ENCODE measurements at regions of chr16 and their contacts with region 1.

Region 1: DNA sequence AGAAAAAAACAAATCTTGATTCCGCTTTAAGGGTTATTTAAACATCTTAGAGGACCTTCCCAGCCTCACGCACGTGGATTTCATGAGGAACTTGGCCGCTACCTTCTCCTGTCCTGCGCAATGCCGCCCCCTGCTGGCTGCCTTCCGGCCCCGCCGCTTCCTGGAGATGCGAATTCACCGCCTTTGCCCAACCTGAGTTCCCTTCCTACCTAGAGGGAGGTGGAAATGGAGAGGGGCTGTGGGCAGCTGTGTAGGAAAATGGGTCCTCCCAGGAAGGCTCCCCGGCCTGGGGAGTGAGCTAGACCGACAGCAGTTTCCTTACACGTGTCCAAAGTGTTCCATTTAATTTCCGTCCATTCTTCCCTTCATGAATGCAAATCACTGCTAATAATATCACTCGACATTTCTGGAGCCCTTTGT is 1.0 kb upstream of the ABCC12 start:
- DNase-seq: peak; percentile 91
- H3K4me3 Mint-ChIP-seq: no peak overlapping the region
- H3K27ac Mint-ChIP-seq: no peak overlapping the region
- H3K4me1 Mint-ChIP-seq: peaks cover 26% of the 10 kb centered on the region
- H3K27me3 Mint-ChIP-seq: peaks cover 26% of the 10 kb centered on the region

Region 2: GRCh38 chr16:47018223-47018891 is 1138.4 kb before region 1 on chr16:
- CTCF ChIA-PET with region 1: no interaction called
- intact Hi-C with region 1: loop called (anchors 5 kb)
- DNase-seq: peak; percentile 73
- H3K4me3 Mint-ChIP-seq: no peak overlapping the region
- H3K27ac Mint-ChIP-seq: no peak overlapping the region
- H3K4me1 Mint-ChIP-seq: peaks cover 24% of the 10 kb centered on the region
- H3K27me3 Mint-ChIP-seq: no peaks in the 10 kb centered on the region

Region 3: GRCh38 chr16:47110939-47111338 is 1045.9 kb before region 1 on chr16:
- CTCF ChIA-PET with region 1: no interaction called
- intact Hi-C with region 1: loop called (anchors 1 kb)
- DNase-seq: no peak
- H3K4me3 Mint-ChIP-seq: no peak overlapping the region
- H3K27ac Mint-ChIP-seq: no peak overlapping the region
- H3K4me1 Mint-ChIP-seq: peaks cover 19% of the 10 kb centered on the region
- H3K27me3 Mint-ChIP-seq: no peaks in the 10 kb centered on the region

Region 4: DNA sequence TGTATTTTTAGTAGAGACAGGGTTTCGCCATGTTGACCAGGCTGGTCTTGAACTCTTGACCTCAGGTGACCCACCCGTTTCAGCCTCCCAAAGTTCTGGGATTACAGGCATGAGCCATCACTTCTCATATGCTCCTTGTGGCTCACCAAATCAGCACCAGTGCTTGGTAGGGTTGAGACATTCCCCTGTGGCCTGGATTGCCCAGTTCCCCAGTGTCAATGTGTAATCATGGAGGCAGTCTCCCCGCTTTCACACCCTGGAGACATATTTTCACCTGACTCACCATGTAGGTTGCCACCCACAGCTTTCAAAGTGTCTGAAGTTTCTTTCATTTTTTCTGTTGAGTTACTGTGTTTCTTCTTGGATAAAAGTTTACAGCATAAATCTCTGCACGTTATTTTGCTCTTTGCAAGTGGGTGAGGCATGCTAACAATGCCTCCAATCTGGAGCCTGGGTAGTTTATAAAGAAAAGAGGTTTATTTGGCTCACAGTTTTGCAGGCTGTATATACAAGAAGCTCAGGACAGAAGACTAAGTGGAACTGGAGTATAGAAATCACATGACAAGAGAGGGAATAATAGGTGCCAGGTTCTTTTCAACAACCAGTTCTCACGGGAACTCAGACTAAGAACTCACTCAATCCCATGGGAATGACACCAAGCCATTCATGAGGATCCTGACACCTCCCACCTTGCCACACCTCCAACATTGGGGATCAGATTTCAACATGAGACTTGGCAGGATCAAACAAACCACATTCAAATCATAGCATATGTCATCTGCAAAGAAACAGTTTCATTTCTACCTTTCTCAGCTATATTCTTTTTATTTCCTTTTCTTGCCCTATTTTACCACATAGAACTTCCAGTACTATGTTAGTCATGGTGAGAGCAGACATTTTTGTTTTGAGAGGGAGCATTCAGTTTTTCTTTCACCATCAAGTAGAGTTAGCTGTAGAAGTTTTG is 582.4 kb before region 1 on chr16:
- CTCF ChIA-PET with region 1: no interaction called
- intact Hi-C with region 1: loop called (anchors 1 kb)
- DNase-seq: peak; percentile 70
- H3K4me3 Mint-ChIP-seq: no peak overlapping the region
- H3K27ac Mint-ChIP-seq: peak overlapping the region; percentile 86
- H3K4me1 Mint-ChIP-seq: peaks cover 56% of the 10 kb centered on the region
- H3K27me3 Mint-ChIP-seq: no peaks in the 10 kb centered on the region

Region 5: DNA sequence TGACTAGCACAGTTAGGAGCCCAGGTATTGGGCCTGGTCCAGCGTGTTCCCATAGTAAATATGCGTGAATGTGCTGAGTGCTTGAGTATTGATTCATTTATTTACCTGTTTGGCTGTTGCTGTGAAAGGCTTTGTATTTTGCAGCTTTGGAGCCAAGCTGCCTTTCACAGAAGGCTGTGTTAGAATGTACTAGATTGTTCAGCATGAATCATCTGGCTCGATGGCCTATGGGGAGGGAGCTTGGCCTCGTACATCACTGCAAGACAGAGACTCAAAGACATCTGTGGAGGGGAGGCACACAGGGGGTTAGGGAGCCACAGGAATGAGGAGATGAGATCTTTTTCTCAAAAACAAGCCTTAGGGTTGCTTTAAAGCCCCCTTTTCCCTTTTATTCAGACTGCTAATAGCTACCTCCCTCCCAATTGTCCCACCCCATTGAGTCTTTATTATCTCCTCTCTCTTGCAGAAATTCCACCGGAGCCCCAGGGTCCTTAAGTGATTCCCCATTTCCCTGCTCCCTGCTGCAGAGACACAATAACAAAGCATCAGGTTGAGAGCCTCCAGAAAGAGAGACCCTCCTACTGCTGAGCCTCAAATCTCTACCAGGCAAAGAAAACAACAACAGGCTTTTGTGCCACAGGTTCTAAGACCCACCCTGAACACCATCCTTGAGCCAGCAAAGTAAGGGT is 308.2 kb before region 1 on chr16:
- CTCF ChIA-PET with region 1: no interaction called
- intact Hi-C with region 1: no loop called
- DNase-seq: no peak
- H3K4me3 Mint-ChIP-seq: no peak overlapping the region
- H3K27ac Mint-ChIP-seq: no peak overlapping the region
- H3K4me1 Mint-ChIP-seq: no peaks in the 10 kb centered on the region
- H3K27me3 Mint-ChIP-seq: no peaks in the 10 kb centered on the region

Region 6: DNA sequence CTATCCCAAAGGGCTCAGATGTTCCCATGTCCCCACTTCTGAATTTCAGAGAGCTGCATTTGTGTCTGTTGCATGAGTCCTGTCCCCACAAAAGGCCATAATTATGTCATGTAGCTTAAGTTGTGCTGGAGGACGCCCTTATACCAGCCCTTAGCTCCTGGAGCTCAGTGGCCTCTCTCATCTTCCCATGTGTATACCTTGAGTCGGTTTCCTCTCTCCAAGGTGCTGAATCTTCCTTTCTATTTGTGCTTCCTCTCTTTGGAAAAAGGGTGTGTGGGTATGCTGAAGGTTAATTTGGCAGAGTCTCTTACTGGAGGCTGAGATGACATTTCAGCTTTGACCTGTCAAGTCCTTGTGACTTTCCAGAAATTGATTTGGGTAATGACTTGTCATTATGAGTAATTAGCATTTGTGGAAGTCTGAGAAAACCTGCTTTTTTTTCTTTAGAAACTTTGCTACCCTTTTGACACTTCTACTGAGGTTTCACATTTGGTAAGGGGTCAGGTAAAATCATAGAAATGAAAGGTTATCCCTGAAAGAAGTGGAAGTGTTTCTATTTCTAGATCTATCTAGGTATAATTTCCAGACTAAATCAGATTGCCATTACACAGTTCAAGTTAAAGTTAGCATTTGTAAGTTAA is 186.4 kb before region 1 on chr16:
- CTCF ChIA-PET with region 1: no interaction called
- intact Hi-C with region 1: loop called (anchors 10 kb)
- DNase-seq: no peak
- H3K4me3 Mint-ChIP-seq: no peak overlapping the region
- H3K27ac Mint-ChIP-seq: no peak overlapping the region
- H3K4me1 Mint-ChIP-seq: no peaks in the 10 kb centered on the region
- H3K27me3 Mint-ChIP-seq: no peaks in the 10 kb centered on the region

Region 7: DNA sequence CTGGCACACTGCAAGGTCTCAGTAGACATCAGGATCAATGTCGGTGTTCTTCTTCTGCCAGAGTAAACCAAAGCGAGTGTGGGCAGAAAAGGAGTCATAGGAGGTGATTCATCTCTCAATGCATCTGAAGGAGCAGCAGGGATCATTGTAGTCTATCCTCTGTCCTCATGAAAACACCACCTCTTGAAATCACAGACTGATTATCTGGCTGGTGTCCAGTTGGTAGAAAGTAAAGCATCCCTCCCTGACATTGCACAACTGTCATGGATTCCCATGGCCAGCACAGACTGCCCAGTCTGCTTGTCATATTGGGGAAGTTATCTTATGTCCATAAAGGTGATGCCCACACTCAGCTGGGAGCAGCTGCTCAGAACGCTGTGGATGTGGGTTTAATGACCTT is 75.1 kb before region 1 on chr16:
- CTCF ChIA-PET with region 1: no interaction called
- intact Hi-C with region 1: no loop called
- DNase-seq: no peak
- H3K4me3 Mint-ChIP-seq: no peak overlapping the region
- H3K27ac Mint-ChIP-seq: no peak overlapping the region
- H3K4me1 Mint-ChIP-seq: no peaks in the 10 kb centered on the region
- H3K27me3 Mint-ChIP-seq: peaks cover 10% of the 10 kb centered on the region

Region 8: DNA sequence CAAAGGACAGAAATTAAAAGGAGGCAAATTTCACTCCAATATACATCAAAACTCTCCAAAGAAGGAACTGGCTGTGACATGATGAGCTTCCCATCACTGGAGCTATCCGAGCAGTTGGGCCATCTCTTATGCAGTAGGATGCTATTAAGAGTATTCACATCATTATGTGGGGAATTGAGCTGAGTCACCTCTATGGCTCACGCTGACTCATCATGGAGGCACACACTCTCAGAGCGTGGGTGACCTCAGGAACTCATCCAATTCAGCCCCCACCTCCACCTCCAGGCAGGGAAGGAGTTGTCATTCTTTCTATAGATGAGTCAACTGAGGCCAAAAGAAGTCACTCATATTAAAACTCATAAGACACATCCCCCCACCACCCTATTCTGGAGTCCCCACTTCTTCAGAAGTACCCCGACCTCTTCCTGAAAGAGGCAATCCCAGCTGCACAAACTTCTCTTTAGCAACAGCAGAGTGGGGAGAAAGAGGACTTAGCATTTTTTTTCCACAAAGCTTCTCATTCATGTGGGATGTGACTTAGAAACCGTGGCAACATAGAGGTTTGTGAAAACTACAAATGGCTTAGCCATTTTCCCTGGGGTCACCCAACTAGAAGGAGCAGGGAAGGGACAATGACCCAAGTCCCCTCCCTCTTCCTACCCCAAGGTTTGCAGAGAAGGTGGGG is 33.6 kb before region 1 on chr16:
- CTCF ChIA-PET with region 1: interaction called, 7 read pairs
- intact Hi-C with region 1: loop called (anchors 1 kb)
- DNase-seq: peak; percentile 74
- H3K4me3 Mint-ChIP-seq: no peak overlapping the region
- H3K27ac Mint-ChIP-seq: no peak overlapping the region
- H3K4me1 Mint-ChIP-seq: peaks cover 15% of the 10 kb centered on the region
- H3K27me3 Mint-ChIP-seq: peaks cover 13% of the 10 kb centered on the region

Region 9: DNA sequence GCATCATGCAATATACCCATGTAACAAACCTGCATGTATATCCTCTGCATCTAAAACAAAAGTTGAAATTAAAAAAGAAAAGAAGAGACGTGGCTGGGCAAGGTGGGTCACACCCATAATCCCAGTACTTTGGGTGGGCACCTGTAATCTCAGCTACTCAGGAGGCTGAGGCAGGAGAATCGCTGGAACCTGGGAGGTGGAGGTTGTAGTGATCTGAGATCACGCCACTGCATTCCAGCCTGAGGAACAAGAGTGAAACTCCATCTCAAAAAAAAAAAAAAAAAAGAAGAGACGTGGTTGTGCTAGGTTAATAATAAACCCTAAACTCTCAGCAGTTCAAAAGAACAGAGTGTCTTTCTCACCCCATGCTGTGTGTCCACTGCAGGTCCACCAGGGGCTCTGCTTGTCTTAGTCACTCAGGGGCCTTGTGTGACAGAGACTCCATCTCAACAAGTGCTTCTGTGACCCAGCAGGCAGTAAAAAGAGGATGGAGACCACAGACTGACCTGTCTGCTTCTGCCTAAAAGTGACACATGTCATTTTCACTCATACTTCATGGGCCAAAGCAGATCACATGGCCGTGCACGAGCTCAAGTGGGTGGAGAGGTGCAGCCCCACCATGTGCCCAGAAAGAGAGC is 475.5 kb after region 1 on chr16:
- CTCF ChIA-PET with region 1: interaction called, 4 read pairs
- intact Hi-C with region 1: loop called (anchors 2 kb)
- DNase-seq: no peak
- H3K4me3 Mint-ChIP-seq: no peak overlapping the region
- H3K27ac Mint-ChIP-seq: no peak overlapping the region
- H3K4me1 Mint-ChIP-seq: peaks cover 11% of the 10 kb centered on the region
- H3K27me3 Mint-ChIP-seq: peaks cover 3% of the 10 kb centered on the region

Measured in activated naive CD4-positive, alpha-beta T cell treated with anti-CD3 and anti-CD28 coated beads for 36 hours (primary cell).